Activated B cell treated with CpG ODN at 0.5 μM for 24 hours (primary cell): ENCODE measurements at regions of chr3 and their contacts with region 1.

Region 1: DNA sequence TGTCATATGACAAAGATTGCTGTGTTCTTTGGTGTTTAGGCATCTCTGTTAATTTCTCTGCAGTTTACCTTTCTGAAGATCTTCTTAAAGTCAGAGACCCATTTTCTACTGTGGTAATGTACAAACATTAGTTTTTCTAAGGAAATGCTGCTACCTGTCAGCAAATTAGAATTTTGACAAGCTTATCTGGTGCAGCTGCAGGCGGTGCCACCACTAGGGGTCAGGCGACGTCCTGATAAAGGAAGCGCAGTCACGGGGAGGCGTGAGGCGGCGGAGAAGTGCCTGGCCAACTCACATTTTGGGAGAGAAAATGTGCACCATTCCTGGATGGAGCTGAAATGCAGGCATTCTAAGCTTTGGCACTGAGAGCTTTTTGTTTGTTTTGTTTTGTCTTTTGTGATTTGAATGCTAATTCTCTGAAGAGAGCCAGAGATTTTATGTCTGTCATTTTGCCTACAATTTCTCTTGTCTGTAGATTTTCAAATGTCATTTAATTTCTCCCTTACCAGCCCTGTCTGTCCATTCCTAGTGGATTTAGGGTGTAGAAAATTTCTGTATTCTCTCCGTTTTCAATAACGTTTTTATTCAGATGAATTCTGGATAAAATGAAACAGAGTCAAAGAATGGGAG is 24.9 kb upstream of the SIAH2 start:
- DNase-seq: peak; percentile 64
- ATAC-seq: peak; percentile 92
- H3K4me3 Mint-ChIP-seq: no peak overlapping the region
- H3K27ac Mint-ChIP-seq: no peak overlapping the region
- H3K4me1 Mint-ChIP-seq: peaks cover 4% of the 10 kb centered on the region
- H3K27me3 Mint-ChIP-seq: peaks cover 6% of the 10 kb centered on the region
- CTCF ChIP-seq: peak; percentile 66

Region 2: GRCh38 chr3:150528354-150528797 is 259.5 kb before region 1 on chr3:
- CTCF ChIA-PET with region 1: interaction called, 6 read pairs
- POLR2A ChIA-PET with region 1: no interaction called
- intact Hi-C with region 1: loop called (anchors 10 kb)
- DNase-seq: no peak
- ATAC-seq: no peak
- H3K4me3 Mint-ChIP-seq: no peak overlapping the region
- H3K27ac Mint-ChIP-seq: no peak overlapping the region
- H3K4me1 Mint-ChIP-seq: no peaks in the 10 kb centered on the region
- H3K27me3 Mint-ChIP-seq: no peaks in the 10 kb centered on the region
- CTCF ChIP-seq: no peak

Region 3: DNA sequence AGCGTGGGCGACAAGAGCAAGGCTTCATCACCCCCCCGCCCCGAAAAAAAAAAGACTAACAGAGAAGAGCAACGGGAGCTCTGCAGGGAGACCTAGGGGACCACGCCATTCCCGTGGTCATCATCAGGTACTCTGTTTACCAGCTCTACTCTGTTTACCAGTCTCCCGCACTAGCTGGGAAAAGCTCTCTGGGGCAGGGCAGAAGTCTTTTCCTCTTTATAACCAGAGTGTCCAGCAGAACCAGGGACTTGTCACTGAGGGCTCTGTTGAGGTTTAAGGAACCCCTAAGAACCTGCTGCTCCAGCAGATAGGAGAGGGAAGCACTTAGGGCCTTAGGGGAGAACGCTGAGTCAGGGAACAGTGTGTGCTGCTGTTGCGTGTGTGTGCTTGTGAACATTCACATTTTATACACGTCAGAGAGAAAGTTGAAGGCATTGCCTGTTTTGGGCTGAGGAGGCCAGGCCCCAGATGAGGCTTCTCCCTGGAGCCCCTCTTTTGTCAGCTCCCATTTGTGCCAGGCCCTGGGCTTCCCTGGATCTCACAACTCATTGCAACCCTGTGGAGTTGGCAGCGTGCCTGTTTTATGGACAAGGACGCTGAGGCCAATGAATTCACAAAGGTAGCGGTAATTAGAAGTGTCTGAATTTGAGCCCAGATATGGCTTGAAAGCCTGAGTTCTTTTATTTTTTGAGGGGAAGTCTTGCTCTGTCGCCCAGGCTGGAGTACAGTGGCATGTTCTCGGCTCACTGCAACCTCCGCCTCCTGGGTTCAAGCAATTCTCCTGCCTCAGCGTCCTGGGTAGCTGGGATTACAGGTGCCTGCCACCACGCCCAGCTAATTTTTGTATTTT is 60.0 kb before region 1 on chr3:
- CTCF ChIA-PET with region 1: interaction called, 10 read pairs
- POLR2A ChIA-PET with region 1: no interaction called
- intact Hi-C with region 1: no loop called
- DNase-seq: no peak
- ATAC-seq: no peak
- H3K4me3 Mint-ChIP-seq: no peak overlapping the region
- H3K27ac Mint-ChIP-seq: no peak overlapping the region
- H3K4me1 Mint-ChIP-seq: peaks cover 4% of the 10 kb centered on the region
- H3K27me3 Mint-ChIP-seq: no peaks in the 10 kb centered on the region
- CTCF ChIP-seq: no peak

Region 4: GRCh38 chr3:150830094-150830681 is 42.3 kb after region 1 on chr3:
- CTCF ChIA-PET with region 1: interaction called, 3 read pairs
- POLR2A ChIA-PET with region 1: no interaction called
- intact Hi-C with region 1: loop called (anchors 5 kb)
- DNase-seq: no peak
- ATAC-seq: peak; percentile 60
- H3K4me3 Mint-ChIP-seq: no peak overlapping the region
- H3K27ac Mint-ChIP-seq: no peak overlapping the region
- H3K4me1 Mint-ChIP-seq: peaks cover 6% of the 10 kb centered on the region
- H3K27me3 Mint-ChIP-seq: peaks cover 4% of the 10 kb centered on the region
- CTCF ChIP-seq: no peak

Region 5: DNA sequence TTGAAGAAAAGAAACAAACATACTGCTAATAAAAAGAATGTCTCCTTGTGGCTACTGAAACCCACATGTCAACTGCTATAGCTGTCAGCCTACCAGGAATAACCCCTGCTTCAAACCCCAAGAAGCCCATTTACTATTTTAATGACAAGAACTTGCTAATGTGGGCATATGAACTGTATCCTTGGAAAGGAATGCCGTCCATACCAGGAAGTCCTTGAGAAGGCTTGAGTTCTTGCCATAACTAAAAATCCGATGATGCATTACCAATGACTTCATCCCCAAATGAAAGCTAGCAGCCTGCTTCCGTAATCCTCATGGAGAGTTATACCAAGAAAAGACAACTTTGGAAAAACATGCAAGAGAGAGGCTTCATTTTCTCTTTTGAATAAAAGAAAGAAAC is 82.5 kb after region 1 on chr3:
- CTCF ChIA-PET with region 1: interaction called, 8 read pairs
- POLR2A ChIA-PET with region 1: no interaction called
- intact Hi-C with region 1: loop called (anchors 1 kb)
- DNase-seq: no peak
- ATAC-seq: no peak
- H3K4me3 Mint-ChIP-seq: no peak overlapping the region
- H3K27ac Mint-ChIP-seq: no peak overlapping the region
- H3K4me1 Mint-ChIP-seq: peaks cover under 1% of the 10 kb centered on the region
- H3K27me3 Mint-ChIP-seq: peaks cover 4% of the 10 kb centered on the region
- CTCF ChIP-seq: no peak

Region 6: DNA sequence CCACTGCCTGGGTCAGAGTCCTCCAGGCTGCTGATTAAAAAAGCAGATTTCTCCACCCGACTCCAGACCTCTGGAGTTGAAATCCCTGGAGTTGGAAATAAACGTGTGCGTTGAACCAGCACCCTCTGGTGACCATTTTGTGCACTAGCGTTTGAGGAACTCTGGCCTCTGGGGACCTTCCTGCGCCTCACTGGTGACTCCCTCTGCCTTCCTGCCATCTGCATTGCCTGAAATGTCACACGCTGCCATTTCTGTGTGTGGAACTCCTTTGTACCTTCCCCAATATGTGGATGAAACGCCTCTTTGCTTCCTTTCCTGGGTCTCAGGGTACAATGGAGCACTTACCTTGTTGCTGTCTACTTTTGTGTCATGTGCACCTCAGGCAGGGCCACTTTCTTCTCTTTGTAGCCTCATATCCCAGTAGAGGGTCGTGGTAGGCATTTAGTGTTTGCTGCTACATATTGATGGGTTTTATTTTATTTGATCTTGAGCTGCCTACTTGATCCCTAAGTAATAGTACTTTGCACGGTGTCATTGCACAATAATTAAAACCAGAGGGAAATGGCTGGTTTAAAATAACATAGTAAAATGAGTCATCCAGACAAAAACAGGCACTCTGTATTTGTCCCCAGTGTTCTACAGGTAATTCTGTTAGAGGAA is 358.3 kb after region 1 on chr3:
- CTCF ChIA-PET with region 1: interaction called, 3 read pairs
- POLR2A ChIA-PET with region 1: no interaction called
- intact Hi-C with region 1: loop called (anchors 1 kb)
- DNase-seq: peak; percentile 36
- ATAC-seq: peak; percentile 99
- H3K4me3 Mint-ChIP-seq: no peak overlapping the region
- H3K27ac Mint-ChIP-seq: no peak overlapping the region
- H3K4me1 Mint-ChIP-seq: peaks cover 4% of the 10 kb centered on the region
- H3K27me3 Mint-ChIP-seq: peaks cover 4% of the 10 kb centered on the region
- CTCF ChIP-seq: peak; percentile 87

Region 7: GRCh38 chr3:151838583-151839312 is 1050.9 kb after region 1 on chr3:
- CTCF ChIA-PET with region 1: no interaction called
- POLR2A ChIA-PET with region 1: no interaction called
- intact Hi-C with region 1: loop called (anchors 5 kb)
- DNase-seq: no peak
- ATAC-seq: peak; percentile 68
- H3K4me3 Mint-ChIP-seq: no peak overlapping the region
- H3K27ac Mint-ChIP-seq: no peak overlapping the region
- H3K4me1 Mint-ChIP-seq: no peaks in the 10 kb centered on the region
- H3K27me3 Mint-ChIP-seq: peaks cover 3% of the 10 kb centered on the region
- CTCF ChIP-seq: peak; percentile 55